Breast epithelium (tissue), 4 donors: ENCODE measurements at regions of chr7 and their contacts with region 1.

Region 1: GRCh38 chr7:84513061-84513460 is 318.5 kb upstream of the SEMA3A start:
- DNase-seq: no peak
- H3K4me3 ChIP-seq: no peak overlapping the region
- H3K27ac ChIP-seq: no peak overlapping the region
- H3K4me1 ChIP-seq: no peaks in the 10 kb centered on the region
- H3K27me3 ChIP-seq: no peaks in the 10 kb centered on the region
- CTCF ChIP-seq: no peak
- POLR2A ChIP-seq: no peak

Region 2: DNA sequence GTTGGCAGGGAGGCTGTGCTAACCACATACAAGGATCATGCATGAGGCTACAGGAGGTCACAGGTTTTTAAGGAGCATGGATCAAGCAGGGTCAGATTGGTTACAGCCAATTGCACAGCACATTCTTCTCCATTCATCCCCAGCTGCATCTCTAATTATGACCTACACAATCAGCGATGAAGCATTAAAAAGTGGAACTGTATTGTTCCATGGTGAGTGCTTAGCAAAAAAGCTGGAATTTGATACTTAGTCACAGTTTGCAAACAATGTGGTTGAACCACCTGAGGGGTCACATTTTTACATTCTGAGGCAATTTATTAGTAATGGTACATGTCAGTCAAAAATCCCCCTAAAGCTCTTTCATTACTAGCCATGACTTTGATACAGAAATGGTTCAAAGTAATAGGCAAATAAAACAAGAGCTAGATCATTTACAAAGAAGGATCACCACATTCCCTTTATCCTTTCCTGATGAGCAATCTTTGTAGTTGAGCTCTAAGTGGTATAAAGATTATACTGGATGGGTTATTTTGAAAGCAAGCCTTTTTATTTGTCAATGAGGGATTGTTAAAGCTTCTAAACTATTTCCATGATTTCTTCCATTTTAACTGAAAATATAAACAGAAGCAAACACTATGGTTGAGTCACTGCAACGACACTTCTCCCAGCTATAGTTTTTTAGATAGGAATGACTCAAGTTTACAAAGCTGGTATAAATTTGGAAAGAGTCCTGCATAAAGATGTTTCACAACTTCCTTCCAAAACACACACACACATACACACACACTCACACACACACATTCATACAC is 100.7 kb before region 1 on chr7:
- intact Hi-C with region 1: no loop called
- DNase-seq: no peak
- H3K4me3 ChIP-seq: no peak overlapping the region
- H3K27ac ChIP-seq: no peak overlapping the region
- H3K4me1 ChIP-seq: no peaks in the 10 kb centered on the region
- H3K27me3 ChIP-seq: no peaks in the 10 kb centered on the region
- CTCF ChIP-seq: no peak
- POLR2A ChIP-seq: no peak

Region 3: GRCh38 chr7:84546403-84546802 is 33.3 kb after region 1 on chr7:
- intact Hi-C with region 1: loop called (anchors 2 kb)
- DNase-seq: no peak
- H3K4me3 ChIP-seq: no peak overlapping the region
- H3K27ac ChIP-seq: no peak overlapping the region
- H3K4me1 ChIP-seq: no peaks in the 10 kb centered on the region
- H3K27me3 ChIP-seq: no peaks in the 10 kb centered on the region
- CTCF ChIP-seq: no peak
- POLR2A ChIP-seq: no peak